ENCODE measurements at regions of chr4 and their contacts with region 1.

Region 1: DNA sequence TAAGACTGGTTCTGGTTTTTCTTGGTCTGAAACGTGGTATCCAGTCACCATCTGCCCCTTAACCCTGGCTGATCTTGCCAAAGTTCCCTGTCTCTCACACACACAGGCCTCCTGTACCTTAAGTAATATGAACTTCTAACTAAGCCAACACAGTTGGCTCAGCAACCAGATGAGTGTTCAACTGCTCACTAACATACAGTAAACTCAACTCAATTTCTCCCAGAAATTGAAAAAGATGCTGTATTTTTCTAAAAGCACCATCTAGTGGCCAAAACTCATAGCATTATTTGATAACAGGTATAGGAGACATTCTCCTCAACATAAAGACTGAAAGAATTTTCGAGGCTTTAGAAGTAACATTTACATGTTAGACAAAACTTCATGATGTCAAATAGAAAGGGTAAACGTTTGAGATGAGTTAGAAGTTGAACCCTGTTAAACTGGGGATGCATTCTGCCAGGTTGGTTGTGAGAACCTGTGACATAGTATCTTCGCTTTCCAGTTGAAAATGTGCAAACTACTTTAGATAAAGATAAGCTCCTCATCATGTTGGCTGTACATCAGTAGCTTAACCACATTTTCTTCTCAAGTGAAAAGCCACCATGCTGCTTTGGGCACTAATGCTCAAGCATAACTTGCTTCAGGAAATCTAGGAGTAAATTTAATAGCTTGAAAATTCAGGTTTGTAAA is 31.2 kb downstream of the CCNI start:
- DNase-seq: peak; percentile 39
- H3K4me3 ChIP-seq: no peak overlapping the region
- H3K27ac ChIP-seq: no peak overlapping the region
- H3K4me1 ChIP-seq: peaks cover 10% of the 10 kb centered on the region
- H3K27me3 ChIP-seq: no peaks in the 10 kb centered on the region
- CTCF ChIP-seq: peak; percentile 63 to 64

Region 2: DNA sequence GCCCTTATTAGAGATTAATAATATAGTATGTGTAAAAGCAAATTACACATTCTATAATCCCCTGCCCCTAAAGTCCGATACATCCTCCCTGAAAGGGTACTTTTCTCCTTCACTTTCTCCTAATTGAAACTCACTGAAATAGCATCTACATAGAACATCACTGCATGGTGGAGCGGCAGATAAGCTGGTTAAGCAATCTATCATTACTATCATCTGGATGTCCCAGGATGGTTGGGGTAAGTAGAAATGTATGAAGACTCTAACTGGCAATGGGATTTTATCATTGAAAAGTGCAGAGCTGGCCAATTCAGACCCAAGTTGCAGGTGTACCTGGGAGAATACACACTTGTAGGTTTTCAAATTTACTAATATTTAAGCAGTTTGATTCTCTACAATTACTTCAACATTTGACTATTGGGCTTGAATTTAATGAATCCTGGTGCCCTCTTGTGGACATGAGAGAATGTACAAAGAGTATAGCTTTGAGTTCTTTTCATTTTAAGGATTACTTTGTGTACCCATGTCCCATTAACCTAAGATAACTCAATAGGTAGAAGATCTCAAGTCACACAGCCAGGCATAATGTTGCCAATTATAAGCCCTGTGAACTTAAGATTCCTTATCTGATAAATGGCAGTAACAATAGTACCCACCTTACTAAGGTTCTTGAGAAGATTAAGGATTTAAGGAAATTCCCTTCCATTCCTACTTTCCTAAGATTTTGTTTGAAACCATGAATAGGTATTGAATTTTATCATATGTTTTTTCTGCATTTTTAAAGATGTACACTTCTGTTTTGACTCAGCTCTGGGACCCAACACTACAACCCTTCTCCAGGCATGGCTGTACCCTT is 539.8 kb before region 1 on chr4:
- CTCF ChIA-PET with region 1: no interaction called
- dilution Hi-C with region 1: no loop called
- in situ Hi-C with region 1: loop called (anchors 5 to 25 kb)
- intact Hi-C with region 1: no loop called
- DNase-seq: peak; percentile 27
- H3K4me3 ChIP-seq: no peak overlapping the region
- H3K27ac ChIP-seq: no peak overlapping the region
- H3K4me1 ChIP-seq: peaks cover 3% of the 10 kb centered on the region
- H3K27me3 ChIP-seq: no peaks in the 10 kb centered on the region
- CTCF ChIP-seq: peak; percentile 49 to 67

Region 3: DNA sequence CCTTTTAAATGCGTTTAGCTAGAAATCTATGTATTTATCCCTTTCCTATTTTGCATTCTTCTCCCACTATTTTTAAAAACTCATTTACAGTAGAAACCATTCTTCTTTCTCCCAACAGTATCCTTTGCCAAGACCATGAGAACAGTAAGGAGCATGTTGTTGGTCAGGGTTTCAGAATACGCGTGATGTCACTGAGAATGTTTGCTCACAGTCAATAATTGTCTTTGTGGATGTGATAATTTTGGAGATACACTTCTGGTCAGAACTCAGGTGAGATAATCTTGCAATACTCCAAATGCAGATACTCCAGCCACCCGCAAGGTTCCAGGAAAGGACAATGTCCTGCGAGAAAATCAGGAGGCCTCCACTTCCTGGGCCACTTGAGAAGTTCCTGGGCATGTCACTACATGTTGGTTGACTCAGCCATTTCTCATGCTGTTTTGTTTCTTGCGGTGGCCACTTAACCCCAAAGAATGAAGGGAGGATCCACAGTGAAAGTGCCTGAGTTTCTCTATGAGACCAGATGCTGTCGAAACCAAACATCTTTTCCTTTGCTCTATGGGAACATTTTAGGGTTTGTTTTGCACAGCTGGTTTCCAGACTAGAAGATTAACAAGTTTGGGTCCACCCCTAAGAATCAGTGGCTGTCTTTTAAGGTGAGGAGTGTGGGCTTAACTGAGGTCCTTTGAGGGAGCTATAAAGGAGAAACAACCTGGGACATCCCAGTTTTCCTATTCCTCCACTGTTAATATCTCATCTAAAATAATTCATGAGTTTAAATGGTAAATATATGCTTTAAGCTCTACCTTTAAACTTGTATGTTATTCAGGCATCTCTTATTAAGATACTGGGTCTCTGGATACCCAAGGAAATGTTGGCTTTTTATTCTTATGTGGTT is 262.7 kb before region 1 on chr4:
- CTCF ChIA-PET with region 1: no interaction called
- dilution Hi-C with region 1: no loop called
- in situ Hi-C with region 1: no loop called
- intact Hi-C with region 1: loop called (anchors 5 kb)
- DNase-seq: peak; percentile 100
- H3K4me3 ChIP-seq: peak overlapping the region; percentile 23 to 52 (median 32)
- H3K27ac ChIP-seq: peak overlapping the region; percentile 100
- H3K4me1 ChIP-seq: peaks cover 33% of the 10 kb centered on the region
- H3K27me3 ChIP-seq: no peaks in the 10 kb centered on the region
- CTCF ChIP-seq: no peak

Region 4: DNA sequence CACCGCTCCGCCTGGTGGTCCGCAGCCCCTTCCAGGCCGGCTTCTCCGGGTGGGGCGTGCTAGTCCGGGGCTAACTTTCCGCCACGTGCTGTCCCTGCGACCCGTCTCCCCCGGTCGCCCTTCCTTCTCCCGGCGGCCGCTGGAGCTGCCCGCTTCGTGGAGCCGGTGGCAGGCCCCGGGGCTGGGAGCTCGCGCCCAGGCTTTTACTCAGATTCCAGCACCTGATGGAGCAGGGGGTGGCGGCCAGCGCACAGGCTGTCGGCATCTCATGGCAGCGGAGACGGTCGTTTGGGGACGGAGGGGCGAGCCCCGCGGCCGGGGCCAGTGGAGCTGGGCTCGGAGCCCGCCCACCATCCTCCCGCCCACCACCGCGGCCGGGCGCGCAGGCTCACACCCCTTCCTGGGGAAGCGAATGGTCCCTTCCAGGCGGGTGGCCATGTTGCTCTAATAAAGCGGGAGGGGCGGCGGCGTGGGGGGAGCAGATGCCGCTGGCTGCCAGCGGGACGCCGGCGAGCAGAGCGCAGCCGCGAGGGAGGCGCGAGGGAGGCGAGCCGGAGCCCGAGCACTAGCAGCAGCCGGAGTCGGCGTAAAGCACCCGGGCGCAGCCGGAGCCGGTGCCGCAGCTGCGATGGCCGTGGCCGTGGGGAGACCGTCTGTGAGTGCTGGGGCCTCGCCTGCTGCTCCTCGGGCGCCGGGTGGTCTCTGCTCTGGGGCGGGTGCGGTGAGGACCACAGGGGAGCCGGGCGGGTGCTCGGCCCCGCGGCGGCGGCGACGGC is 95.1 kb before region 1 on chr4 and contains the start of gene SEPTIN11:
- CTCF ChIA-PET with region 1: no interaction called
- dilution Hi-C with region 1: no loop called
- in situ Hi-C with region 1: no loop called
- intact Hi-C with region 1: loop called (anchors 1 kb)
- DNase-seq: peak; percentile 92
- H3K4me3 ChIP-seq: peak within 1 kb of the TSS; percentile 61 to 80 (median 70)
- H3K27ac ChIP-seq: peak within 1 kb of the TSS; percentile 80
- H3K4me1 ChIP-seq: peaks cover 19% of the 10 kb centered on the region
- H3K27me3 ChIP-seq: no peaks in the 10 kb centered on the region
- CTCF ChIP-seq: no peak
- total RNA-seq, gene SEPTIN11: 156 to 188 TPM

Region 5: DNA sequence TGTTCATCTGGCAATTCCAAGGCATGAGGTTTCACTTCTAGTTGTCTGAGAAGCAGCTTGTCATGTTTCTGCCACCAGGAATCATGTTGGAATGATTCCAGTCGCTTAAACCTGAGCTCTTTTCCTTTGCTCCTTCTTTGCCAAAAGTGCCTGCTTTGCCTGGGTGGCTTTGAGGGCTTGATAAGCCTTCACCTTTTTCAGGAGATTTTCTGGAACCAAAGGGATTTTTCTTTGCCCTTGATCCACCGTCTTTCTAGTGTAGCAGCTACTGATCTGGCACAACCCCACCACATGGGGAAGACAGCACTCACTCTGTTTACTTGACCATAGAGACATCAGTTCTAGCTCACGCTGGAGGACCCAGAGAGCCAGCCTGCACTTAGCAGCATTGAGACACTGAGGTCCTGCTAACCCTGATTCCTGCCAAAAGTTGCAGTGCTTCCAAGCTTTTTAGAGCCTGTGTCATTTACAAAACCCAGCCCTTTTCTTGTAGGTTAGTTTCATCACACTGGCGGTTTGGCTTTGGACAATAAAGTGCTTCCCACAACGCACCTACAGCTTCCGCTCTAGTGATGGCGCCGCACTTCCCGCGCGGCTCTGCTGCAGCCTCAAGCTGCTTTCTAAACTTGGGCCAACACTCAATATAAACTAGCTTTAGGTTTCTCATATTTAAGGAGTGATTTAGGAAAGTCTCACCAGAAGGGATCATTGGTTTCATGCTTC is 38.4 kb after region 1 on chr4:
- CTCF ChIA-PET with region 1: no interaction called
- dilution Hi-C with region 1: no loop called
- in situ Hi-C with region 1: no loop called
- intact Hi-C with region 1: no loop called
- DNase-seq: no peak
- H3K4me3 ChIP-seq: no peak overlapping the region
- H3K27ac ChIP-seq: no peak overlapping the region
- H3K4me1 ChIP-seq: peaks cover 6% of the 10 kb centered on the region
- H3K27me3 ChIP-seq: no peaks in the 10 kb centered on the region
- CTCF ChIP-seq: no peak

Region 6: GRCh38 chr4:77308843-77309242 is 264.2 kb after region 1 on chr4:
- CTCF ChIA-PET with region 1: no interaction called
- dilution Hi-C with region 1: no loop called
- in situ Hi-C with region 1: loop called in 1 of 2 experiments (anchors 25 kb)
- intact Hi-C with region 1: no loop called
- DNase-seq: peak; percentile 38
- H3K4me3 ChIP-seq: no peak overlapping the region
- H3K27ac ChIP-seq: no peak overlapping the region
- H3K4me1 ChIP-seq: no peaks in the 10 kb centered on the region
- H3K27me3 ChIP-seq: no peaks in the 10 kb centered on the region
- CTCF ChIP-seq: peak; percentile 51 to 64

Measured in mammary epithelial cell (primary cell).